Common myeloid progenitor, CD34-positive (primary cell): ENCODE measurements at regions of chr1 and their contacts with region 1.

Region 1: DNA sequence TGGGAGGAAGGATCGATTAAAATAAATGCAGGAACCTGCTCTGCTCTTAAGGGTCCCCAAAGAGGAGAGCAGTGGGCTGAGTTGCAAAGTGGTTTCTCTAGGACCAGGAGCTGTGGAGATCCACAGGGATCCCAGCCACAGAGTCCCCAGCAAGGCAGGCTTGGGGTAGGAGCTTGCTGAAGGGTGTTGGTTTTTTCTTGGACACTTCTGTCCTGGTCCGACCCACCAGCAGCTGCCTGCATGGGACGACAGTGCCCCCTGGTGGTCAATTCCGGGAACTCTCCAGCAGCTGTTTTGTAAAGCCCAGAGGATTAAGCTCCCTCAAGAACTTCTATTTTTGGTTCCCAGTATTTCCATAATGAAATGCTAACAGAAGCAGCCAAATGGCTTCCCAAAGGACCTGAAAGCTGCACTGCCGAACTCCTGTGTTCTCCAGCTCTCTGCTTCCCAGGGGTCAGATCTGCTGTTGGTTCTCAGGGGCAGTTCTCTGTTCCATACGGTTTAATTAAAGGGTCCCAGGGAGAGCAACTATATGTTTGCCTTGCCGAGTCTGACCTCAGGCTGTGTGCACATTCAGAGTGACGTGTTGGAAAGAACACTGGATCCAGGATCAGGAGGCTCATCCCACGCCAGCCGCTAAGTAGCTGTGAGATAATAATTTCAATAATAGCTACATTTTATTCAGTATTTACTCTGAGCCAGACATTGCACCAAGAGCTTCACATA is 23.2 kb downstream of the NENF start:
- DNase-seq: peak; percentile 73 to 87 (median 79)
- H3K4me3 ChIP-seq: no peak overlapping the region
- H3K27ac ChIP-seq: no peak overlapping the region
- H3K4me1 ChIP-seq: peaks cover 0 to 26% (median 15%) of the 10 kb centered on the region in 4 experiments
- H3K27me3 ChIP-seq: no peaks in the 10 kb centered on the region

Region 2: DNA sequence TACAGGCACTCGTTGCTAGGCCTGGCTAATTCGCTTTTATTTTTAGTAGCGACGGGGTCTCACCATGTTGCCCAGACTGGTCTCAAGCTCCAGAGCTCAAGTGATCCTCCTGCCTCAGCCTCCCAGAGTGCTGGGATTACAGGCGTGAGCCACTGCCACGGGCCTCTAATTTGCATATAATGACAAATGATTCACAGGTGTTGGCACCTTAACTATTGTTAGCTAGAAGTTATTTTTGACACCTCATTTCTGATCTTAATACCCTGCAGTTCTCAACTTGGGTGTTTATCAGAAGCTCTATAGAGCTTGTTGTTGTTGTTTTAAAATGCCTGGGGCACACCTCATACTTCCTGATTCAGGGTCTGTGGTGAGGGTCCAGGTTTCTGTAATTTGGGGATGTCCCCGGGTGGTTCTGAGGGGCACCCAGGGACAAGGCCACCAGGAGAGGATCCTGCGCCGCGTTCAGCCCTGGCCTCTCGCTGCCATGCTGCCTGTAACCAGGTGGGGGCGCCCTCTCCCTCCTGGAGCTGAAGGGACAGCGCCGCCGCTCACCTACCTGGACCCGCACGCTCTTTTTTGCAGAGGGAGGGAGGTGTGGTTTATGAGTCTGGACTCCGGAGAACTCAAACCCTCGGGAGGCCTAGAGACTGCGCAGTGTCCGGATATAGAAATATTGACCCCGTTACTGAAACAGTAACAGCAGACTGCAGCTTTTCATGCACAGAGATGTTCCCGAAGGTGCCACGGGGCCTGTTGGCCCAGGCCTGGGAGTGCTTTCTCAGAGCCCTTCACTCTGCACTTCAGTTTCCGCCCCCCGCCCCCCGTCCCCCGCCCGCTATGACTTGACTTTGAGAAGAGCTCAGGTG is 757.6 kb before region 1 on chr1:
- CTCF ChIA-PET with region 1: interaction called, 12 read pairs
- POLR2A ChIA-PET with region 1: no interaction called
- DNase-seq: peak; percentile 64 to 79 (median 77)
- H3K4me3 ChIP-seq: peak overlapping the region in 5 of 7 experiments; percentile 23 to 70 (median 51)
- H3K27ac ChIP-seq: no peak overlapping the region
- H3K4me1 ChIP-seq: peaks cover 0 to 25% (median 15%) of the 10 kb centered on the region in 4 experiments
- H3K27me3 ChIP-seq: no peaks in the 10 kb centered on the region

Region 3: DNA sequence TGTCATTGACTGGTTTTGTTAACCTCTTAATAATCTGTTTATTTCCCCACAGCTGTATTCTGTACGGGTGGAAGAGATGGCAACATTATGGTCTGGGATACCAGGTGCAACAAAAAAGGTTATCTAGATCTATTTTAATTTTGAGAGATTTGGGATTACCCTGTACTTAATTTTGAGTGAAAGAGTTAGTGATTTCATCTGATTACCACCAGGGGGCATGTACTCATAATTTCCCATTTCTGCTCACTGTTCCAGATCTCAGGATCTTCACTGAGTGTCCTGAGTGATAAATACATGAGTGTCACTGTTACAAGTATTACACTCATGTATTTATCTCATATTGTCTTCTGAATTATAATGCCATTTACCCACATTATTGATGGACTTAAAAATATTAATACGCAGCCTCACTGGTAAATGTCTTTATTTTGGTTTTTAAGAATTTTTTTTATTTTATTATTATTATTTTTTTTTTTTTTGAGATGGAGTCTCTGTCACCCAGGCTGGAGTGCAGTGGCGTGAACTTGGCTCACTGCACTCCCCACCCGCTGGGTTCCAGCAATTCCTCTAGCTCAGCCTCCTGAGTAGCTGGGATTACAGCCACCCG is 393.0 kb before region 1 on chr1:
- CTCF ChIA-PET with region 1: interaction called, 83 read pairs
- POLR2A ChIA-PET with region 1: no interaction called
- DNase-seq: peak; percentile 47 to 68 (median 61)
- H3K4me3 ChIP-seq: no peak overlapping the region
- H3K27ac ChIP-seq: no peak overlapping the region
- H3K4me1 ChIP-seq: no peaks in the 10 kb centered on the region
- H3K27me3 ChIP-seq: no peaks in the 10 kb centered on the region

Region 4: GRCh38 chr1:212186427-212187207 is 269.3 kb before region 1 on chr1:
- CTCF ChIA-PET with region 1: no interaction called
- POLR2A ChIA-PET with region 1: no interaction called
- DNase-seq: peak; percentile 27 to 49 (median 42)
- H3K4me3 ChIP-seq: peak overlapping the region in 3 of 7 experiments; percentile 16 to 63 (median 30)
- H3K27ac ChIP-seq: no peak overlapping the region
- H3K4me1 ChIP-seq: peaks cover 3 to 20% (median 9%) of the 10 kb centered on the region in 4 experiments
- H3K27me3 ChIP-seq: no peaks in the 10 kb centered on the region

Region 5: DNA sequence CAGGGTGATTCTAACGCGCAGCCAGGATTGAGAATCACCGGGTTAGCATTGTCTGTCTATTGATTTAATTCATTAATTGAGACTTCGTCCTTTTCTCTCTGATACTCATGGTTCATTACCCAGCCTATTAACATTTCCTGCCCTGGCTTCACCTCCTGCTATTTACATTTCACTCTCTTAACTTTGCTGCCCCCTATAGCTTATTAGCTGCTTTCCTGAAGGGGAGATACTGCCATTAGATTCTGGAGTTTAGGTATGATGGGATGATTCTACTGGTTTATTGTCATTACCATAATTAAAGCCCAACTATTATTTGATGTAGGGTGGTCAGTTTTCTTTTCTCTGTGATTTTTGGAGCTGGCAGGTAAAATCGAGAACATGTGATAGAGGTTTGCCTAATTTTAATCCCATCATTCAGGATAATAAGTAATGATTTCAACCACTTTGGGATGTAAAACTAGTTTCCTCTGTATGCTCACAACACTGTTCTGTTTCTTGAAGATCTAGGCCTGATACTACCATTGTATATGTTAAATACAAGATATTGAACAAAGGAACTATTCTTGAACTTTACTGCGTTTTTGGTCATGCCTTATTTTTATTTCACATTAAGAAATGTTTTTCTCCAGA is 164.3 kb before region 1 on chr1:
- CTCF ChIA-PET with region 1: interaction called, 20 read pairs
- POLR2A ChIA-PET with region 1: no interaction called
- DNase-seq: peak; percentile 72 to 77 (median 77)
- H3K4me3 ChIP-seq: no peak overlapping the region
- H3K27ac ChIP-seq: peak overlapping the region in 1 of 2 experiments; percentile 52
- H3K4me1 ChIP-seq: peaks cover 35 to 66% (median 38%) of the 10 kb centered on the region in 4 experiments
- H3K27me3 ChIP-seq: no peaks in the 10 kb centered on the region

Region 6: GRCh38 chr1:212414328-212415106 is 41.4 kb before region 1 on chr1 and contains the start of gene PACC1:
- CTCF ChIA-PET with region 1: interaction called, 12 read pairs
- POLR2A ChIA-PET with region 1: no interaction called
- DNase-seq: peak; percentile 97 to 99 (median 99)
- H3K4me3 ChIP-seq: peak within 1 kb of the TSS; percentile 86 to 95 (median 90)
- H3K27ac ChIP-seq: peak within 1 kb of the TSS; percentile 69 to 78
- H3K4me1 ChIP-seq: peaks cover 9 to 52% (median 27%) of the 10 kb centered on the region in 4 experiments
- H3K27me3 ChIP-seq: no peaks in the 10 kb centered on the region

Region 7: DNA sequence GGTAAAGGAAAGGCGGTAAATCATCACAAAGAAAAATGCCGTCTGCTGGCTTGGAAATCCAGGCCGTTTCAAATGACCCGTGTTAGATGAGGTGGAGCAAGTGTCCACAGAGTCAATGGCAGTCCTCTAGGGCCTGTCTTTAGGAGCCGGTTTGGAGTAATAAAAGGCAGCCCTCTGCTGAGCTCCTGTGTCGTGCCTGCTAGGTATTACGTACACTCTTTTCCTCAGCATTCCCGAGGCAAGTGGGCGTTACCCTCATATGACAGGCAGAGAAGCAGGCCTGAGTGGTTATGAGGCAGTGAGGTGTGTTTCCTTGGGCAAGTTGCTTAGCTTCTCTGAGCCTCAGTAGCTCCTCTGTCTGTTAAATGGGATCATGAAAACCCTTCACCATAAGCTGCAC is 15.5 kb before region 1 on chr1:
- CTCF ChIA-PET with region 1: interaction called, 13 read pairs
- POLR2A ChIA-PET with region 1: no interaction called
- DNase-seq: no peak
- H3K4me3 ChIP-seq: no peak overlapping the region
- H3K27ac ChIP-seq: no peak overlapping the region
- H3K4me1 ChIP-seq: peaks cover 0 to 4% (median under 1%) of the 10 kb centered on the region in 4 experiments
- H3K27me3 ChIP-seq: no peaks in the 10 kb centered on the region

Region 8: GRCh38 chr1:212477014-212477679 is 21.2 kb after region 1 on chr1:
- CTCF ChIA-PET with region 1: interaction called, 10 read pairs
- POLR2A ChIA-PET with region 1: no interaction called
- DNase-seq: peak; percentile 85 to 92 (median 88)
- H3K4me3 ChIP-seq: no peak overlapping the region
- H3K27ac ChIP-seq: no peak overlapping the region
- H3K4me1 ChIP-seq: peaks cover 0 to 7% (median 0%) of the 10 kb centered on the region in 4 experiments
- H3K27me3 ChIP-seq: no peaks in the 10 kb centered on the region

Region 9: GRCh38 chr1:212542761-212543187 is 86.8 kb after region 1 on chr1:
- CTCF ChIA-PET with region 1: no interaction called
- POLR2A ChIA-PET with region 1: no interaction called
- DNase-seq: no peak
- H3K4me3 ChIP-seq: no peak overlapping the region
- H3K27ac ChIP-seq: no peak overlapping the region
- H3K4me1 ChIP-seq: peaks cover 0 to 3% (median 0%) of the 10 kb centered on the region in 4 experiments
- H3K27me3 ChIP-seq: no peaks in the 10 kb centered on the region